ENCODE measurements at regions of chr9 and their contacts with region 1.

Region 1: DNA sequence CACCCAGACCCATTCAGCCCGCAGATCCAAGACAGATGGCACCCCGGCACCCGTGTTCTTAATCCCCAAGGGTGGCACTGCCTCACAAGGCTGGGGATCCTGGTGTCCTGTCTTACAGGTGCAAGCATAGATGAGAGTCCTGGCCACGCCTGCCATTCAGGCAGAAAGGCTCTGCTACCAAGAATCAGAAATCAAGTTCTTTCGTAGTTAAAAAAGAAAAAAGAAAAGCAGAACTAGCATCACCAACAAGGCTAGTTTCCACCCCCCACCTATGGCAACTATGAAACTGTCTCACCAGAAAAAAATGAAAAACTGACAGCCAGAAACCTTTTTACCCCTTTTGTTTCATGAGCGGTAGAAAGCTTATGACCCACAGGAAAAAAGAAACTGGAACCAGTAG is 170.4 kb downstream of the SYK start:
- DNase-seq: no peak
- H3K4me3 ChIP-seq: no peak overlapping the region
- H3K27ac ChIP-seq: no peak overlapping the region
- H3K4me1 ChIP-seq: peaks cover 44% of the 10 kb centered on the region
- H3K27me3 ChIP-seq: no peaks in the 10 kb centered on the region
- CTCF ChIP-seq: no peak

Region 2: DNA sequence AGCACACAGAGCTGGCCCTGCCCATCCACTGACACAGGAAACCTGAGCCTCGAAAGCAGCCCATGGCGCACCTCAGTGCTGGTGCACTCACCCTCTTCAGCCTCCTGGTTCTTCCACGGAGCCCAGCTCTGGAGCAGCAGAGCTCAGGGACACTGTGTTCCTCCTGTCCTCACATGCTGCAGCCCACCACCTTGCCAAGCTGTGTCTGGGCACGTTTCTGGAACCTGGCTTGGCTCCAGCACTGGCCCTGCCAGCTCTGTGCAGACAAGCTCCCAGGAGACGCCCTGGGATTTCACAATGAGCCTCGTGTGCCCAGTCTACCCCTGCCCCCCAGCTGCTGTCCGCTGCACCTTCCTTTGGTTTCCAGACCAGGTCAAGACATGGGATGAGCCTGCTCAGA is 50.9 kb before region 1 on chr9:
- CTCF ChIA-PET with region 1: no interaction called
- dilution Hi-C with region 1: no loop called
- in situ Hi-C with region 1: no loop called
- intact Hi-C with region 1: loop called (anchors 2 kb)
- DNase-seq: peak; percentile 97
- H3K4me3 ChIP-seq: no peak overlapping the region
- H3K27ac ChIP-seq: peak overlapping the region; percentile 25
- H3K4me1 ChIP-seq: peaks cover 35% of the 10 kb centered on the region
- H3K27me3 ChIP-seq: no peaks in the 10 kb centered on the region
- CTCF ChIP-seq: peak in 1 of 2 donors; percentile 10

Region 3: DNA sequence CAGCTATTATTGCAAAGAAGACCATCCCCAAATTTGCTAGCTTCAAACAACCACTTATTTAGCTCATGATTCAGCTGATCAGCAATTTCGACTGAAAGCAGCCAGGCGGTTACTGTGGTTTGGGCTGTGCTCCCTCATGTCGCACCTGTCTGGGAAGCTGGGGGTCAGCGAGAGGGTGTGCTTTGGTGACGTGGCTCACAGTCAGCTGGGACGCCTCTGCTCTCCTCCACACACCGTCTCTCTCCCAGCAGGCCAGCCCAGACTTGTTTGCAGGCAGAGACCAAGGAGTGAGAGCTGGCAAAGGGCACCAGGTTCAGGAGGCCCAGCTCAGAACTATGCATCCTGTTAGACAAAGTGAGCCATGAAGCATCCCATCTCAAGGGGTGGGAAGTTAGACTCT is 29.5 kb before region 1 on chr9:
- CTCF ChIA-PET with region 1: no interaction called
- dilution Hi-C with region 1: loop called (anchors 5 kb)
- in situ Hi-C with region 1: no loop called
- intact Hi-C with region 1: loop called (anchors 2 kb)
- DNase-seq: peak; percentile 100
- H3K4me3 ChIP-seq: no peak overlapping the region
- H3K27ac ChIP-seq: peak overlapping the region; percentile 87
- H3K4me1 ChIP-seq: peaks cover 26% of the 10 kb centered on the region
- H3K27me3 ChIP-seq: no peaks in the 10 kb centered on the region
- CTCF ChIP-seq: no peak

Region 4: GRCh38 chr9:90991953-90992352 is 19.9 kb after region 1 on chr9:
- CTCF ChIA-PET with region 1: no interaction called
- dilution Hi-C with region 1: no loop called
- in situ Hi-C with region 1: no loop called
- intact Hi-C with region 1: loop called (anchors 1 kb)
- DNase-seq: peak; percentile 25
- H3K4me3 ChIP-seq: no peak overlapping the region
- H3K27ac ChIP-seq: peak overlapping the region; percentile 72
- H3K4me1 ChIP-seq: peaks cover 34% of the 10 kb centered on the region
- H3K27me3 ChIP-seq: no peaks in the 10 kb centered on the region
- CTCF ChIP-seq: no peak

Region 5: DNA sequence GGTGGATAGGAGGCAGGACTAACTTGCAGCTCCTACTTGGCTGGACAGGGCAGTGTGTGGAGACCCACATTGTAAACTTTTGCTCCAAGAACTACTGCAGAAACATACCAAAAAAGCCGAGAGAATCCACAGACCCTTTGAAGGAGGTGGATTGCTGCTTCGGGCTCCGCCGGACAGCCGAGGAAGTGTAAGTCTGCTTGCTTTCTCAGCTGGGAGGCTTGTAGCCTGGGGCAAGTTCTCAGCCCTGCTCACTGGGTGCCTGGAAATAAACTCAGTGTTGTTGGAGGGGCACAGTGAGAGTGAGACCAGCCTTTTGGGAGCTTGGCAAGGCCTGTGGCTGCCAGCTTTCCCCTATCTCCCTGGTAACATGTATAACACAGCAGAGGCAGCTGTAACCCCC is 45.2 kb after region 1 on chr9:
- CTCF ChIA-PET with region 1: no interaction called
- dilution Hi-C with region 1: no loop called
- in situ Hi-C with region 1: no loop called
- intact Hi-C with region 1: no loop called
- DNase-seq: no peak
- H3K4me3 ChIP-seq: no peak overlapping the region
- H3K27ac ChIP-seq: no peak overlapping the region
- H3K4me1 ChIP-seq: peaks cover 3% of the 10 kb centered on the region
- H3K27me3 ChIP-seq: no peaks in the 10 kb centered on the region
- CTCF ChIP-seq: no peak